Activated CD4-positive, alpha-beta memory T cell treated with anti-CD3 and anti-CD28 coated beads for 36 hours (primary cell): ENCODE measurements at regions of chr14 and their contacts with region 1.

Region 1: DNA sequence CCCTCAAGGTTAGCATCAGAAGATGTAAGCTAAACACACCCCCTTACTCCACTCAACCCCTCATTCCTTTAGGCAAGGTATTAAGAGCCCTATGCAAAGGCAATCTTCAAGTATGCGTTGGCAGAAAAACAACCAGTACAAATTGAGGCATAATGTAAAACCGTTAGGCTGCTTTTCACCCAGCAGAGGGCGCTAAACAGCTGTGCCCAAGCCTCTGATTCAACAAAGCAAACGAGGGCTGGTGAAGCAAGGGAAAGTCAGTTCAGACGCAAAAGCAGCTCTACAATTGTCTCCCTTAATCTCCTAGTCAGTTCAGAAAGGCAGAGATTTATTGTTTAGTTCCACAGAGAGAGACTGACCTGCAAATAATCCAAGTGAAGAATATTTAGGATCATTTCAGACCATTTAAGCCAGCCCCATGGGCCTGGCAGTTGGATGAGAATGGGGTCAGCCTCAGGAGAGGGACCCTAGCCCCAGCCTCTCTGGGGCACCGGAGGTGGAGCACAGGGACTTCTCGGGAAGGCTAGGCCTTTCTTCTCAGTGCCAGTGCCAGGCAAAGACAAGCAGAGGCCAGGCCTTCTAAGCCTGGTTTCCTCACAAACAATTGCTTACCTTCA is 23.5 kb downstream of the DCAF5 start:
- DNase-seq: peak; percentile 81
- H3K4me3 Mint-ChIP-seq: no peak overlapping the region
- H3K27ac Mint-ChIP-seq: peak overlapping the region; percentile 31
- H3K4me1 Mint-ChIP-seq: peaks cover 59% of the 10 kb centered on the region
- H3K27me3 Mint-ChIP-seq: no peaks in the 10 kb centered on the region

Region 2: GRCh38 chr14:69055999-69056788 is 73.2 kb before region 1 on chr14:
- CTCF ChIA-PET with region 1: no interaction called
- POLR2A ChIA-PET with region 1: no interaction called
- intact Hi-C with region 1: no loop called
- DNase-seq: peak; percentile 21
- H3K4me3 Mint-ChIP-seq: no peak overlapping the region
- H3K27ac Mint-ChIP-seq: peak overlapping the region; percentile 20
- H3K4me1 Mint-ChIP-seq: peaks cover 16% of the 10 kb centered on the region
- H3K27me3 Mint-ChIP-seq: no peaks in the 10 kb centered on the region

Region 3: GRCh38 chr14:69142101-69142500 is 12.7 kb after region 1 on chr14:
- CTCF ChIA-PET with region 1: interaction called, 146 read pairs
- POLR2A ChIA-PET with region 1: interaction called, 3 read pairs
- intact Hi-C with region 1: no loop called
- DNase-seq: no peak
- H3K4me3 Mint-ChIP-seq: no peak overlapping the region
- H3K27ac Mint-ChIP-seq: no peak overlapping the region
- H3K4me1 Mint-ChIP-seq: peaks cover 47% of the 10 kb centered on the region
- H3K27me3 Mint-ChIP-seq: no peaks in the 10 kb centered on the region

Region 4: DNA sequence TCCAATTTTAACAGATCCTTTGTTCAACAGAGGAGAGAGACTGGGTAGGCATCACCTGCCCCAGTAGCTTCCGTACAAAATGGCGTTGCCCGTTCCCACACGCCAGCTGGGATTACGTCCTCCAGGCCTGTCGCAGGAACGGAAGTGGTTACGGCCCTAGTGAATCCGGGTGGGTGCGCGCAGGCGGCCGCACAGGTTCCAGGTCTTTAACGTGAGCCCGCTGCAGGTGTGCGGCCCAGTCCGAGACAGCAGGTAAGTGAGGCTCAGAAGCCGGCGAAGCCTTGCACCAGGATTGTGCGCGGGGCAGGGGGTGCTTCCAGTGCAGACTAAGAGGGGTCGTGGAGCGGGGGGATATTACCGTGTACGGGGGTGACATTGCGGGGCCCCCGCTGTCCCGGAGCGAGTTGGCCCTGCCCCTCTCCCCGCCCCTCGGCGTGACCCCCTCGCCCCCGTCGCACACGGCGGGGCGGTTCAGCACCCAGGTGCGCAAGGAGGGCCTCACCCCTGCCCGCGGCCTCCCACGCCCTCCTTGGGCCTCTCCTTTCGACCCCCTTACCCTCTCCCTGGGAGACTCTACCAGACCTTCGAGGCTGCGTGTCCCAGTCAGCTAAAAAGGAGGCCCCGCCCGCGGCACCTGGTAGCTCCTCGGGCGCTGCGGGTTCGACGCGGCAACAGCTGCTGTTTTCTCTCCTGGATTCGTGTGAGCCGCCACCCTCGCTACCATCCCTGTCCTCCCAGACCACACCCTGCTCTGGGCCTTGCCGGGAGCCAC is 62.2 kb after region 1 on chr14 and contains the start of gene EXD2:
- CTCF ChIA-PET with region 1: interaction called, 14 read pairs
- POLR2A ChIA-PET with region 1: no interaction called
- intact Hi-C with region 1: loop called (anchors 2 kb)
- DNase-seq: peak; percentile 88
- H3K4me3 Mint-ChIP-seq: peak within 1 kb of the TSS; percentile 85
- H3K27ac Mint-ChIP-seq: peak within 1 kb of the TSS; percentile 78
- H3K4me1 Mint-ChIP-seq: peaks cover 12% of the 10 kb centered on the region
- H3K27me3 Mint-ChIP-seq: no peaks in the 10 kb centered on the region
- total RNA-seq, gene EXD2: 10.5 to 11.5 TPM

Region 5: DNA sequence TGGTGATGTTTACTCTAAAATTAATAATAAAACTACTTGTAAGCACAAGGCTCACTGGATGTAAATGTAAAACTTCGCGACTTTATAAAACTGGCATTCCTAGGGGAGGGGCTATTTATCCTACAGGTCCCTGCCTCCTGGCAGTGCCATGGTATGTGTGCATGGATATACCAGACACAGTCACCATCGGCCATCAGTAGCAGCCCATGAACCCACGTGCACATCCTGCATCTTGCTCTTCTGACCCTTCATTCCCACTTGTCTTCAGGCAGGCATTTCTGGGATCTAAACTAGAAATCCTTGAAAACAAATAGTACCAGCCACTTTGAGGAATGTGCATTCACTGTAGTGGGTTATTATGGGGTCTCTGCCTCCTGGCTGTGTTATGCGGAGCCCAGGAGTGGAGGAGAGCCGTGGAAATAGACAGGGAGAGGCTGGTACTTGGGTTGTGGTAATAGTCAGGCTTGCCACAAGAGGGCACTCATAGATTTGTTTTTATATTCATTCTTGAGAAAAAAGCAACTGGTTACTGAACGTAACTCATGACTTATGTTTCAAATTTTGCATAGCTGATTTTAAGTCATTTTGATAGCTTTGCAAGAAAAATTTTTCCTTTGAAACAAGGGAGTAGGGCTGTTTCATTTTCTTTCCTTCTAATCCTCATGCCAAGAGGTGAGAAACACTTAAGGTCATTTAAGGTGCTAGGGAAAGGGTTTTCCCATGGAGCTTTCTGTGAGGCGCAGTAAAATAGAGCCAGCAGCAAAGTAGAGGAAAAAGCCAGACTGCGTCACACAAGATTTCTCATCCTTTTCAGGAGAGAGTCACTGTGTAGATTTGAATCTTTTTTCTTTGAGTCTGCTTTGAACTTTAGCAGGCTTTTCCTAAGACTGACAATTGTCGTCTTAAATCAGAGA is 113.2 kb after region 1 on chr14:
- CTCF ChIA-PET with region 1: interaction called, 40 read pairs
- POLR2A ChIA-PET with region 1: no interaction called
- intact Hi-C with region 1: loop called (anchors 5 kb)
- DNase-seq: peak; percentile 62
- H3K4me3 Mint-ChIP-seq: no peak overlapping the region
- H3K27ac Mint-ChIP-seq: no peak overlapping the region
- H3K4me1 Mint-ChIP-seq: no peaks in the 10 kb centered on the region
- H3K27me3 Mint-ChIP-seq: no peaks in the 10 kb centered on the region

Region 6: DNA sequence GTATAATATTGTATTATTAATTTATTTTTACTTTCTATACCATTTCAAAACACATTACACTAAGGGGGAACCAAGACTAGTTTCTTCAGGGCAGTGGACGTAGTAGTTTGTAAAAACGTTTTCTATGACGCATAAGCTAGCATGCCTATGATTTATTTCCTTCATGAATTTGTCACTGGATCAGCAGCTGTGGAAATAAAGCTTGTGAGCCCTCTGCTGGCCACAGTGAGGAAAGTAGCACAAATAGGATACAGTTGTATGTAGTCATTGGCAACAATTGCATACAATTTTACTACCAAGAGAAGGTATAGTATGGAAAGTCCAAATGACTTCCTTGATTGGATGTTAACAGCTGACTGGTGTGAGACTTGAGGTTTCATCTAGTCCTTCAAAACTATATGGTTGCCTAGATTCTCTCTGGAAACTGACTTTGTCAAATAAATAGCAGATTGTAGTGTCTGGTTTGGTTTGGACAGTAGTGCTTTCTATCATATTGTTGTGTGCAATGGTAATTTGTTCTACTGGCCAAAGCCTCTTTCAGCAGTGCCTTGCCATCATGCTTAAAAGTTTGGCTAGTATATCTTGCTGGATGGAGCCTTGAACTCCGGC is 330.8 kb after region 1 on chr14:
- CTCF ChIA-PET with region 1: interaction called, 17 read pairs
- POLR2A ChIA-PET with region 1: no interaction called
- intact Hi-C with region 1: loop called (anchors 2 kb)
- DNase-seq: peak; percentile 77
- H3K4me3 Mint-ChIP-seq: no peak overlapping the region
- H3K27ac Mint-ChIP-seq: no peak overlapping the region
- H3K4me1 Mint-ChIP-seq: no peaks in the 10 kb centered on the region
- H3K27me3 Mint-ChIP-seq: no peaks in the 10 kb centered on the region